Heart right ventricle (tissue), 16 donors: ENCODE measurements at regions of chr22 and their contacts with region 1.

Region 1: DNA sequence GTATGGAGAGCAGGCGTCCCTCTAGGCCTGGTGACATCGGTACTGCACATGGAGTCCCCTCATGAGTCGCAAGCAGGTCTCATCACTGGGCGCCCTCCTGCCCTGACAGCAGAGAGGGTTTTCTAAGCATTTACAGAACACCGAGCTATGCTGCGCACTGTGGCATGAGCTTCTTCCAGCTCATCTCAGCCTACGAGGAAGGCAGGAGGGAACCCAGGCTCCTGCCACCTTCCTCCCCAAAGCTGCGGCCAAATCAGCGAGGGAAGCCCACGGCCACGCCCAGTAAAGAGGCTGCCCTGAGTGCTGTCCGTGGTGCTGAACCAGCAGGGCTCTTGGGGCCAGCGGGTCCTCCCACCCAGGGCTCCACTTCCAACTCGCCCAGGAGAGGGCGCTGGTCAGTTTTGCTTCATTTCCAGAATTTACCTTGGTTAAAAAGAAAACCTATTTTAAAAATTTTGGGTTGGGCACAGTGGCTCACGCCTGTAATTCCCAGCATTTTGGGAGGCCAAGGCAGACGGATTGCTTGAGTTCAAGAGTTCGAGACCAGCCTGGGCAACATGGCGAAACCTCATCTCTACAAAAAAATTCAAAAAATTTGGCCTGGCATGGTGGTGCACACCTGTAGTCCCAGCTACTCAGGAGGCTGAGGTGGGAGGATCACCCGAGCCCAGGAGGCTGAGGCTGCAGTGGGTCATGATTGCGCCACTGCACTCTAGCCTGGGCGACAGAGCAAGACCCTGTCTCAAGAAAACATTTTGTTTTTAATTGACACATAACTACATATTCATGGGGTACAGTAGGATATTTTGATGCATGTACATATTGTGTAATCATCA is 34.2 kb downstream of the PHF21B start:
- DNase-seq: peak; percentile 80 to 82
- ATAC-seq: peak; percentile 76 to 94 (median 90)
- H3K4me3 ChIP-seq: no peak overlapping the region
- H3K27ac ChIP-seq: no peak overlapping the region
- H3K4me1 ChIP-seq: no peaks in the 10 kb centered on the region
- H3K27me3 ChIP-seq: peaks cover 0 to 31% (median 10%) of the 10 kb centered on the region in 7 donors
- CTCF ChIP-seq: peak; percentile 22 to 75 (median 69)

Region 2: DNA sequence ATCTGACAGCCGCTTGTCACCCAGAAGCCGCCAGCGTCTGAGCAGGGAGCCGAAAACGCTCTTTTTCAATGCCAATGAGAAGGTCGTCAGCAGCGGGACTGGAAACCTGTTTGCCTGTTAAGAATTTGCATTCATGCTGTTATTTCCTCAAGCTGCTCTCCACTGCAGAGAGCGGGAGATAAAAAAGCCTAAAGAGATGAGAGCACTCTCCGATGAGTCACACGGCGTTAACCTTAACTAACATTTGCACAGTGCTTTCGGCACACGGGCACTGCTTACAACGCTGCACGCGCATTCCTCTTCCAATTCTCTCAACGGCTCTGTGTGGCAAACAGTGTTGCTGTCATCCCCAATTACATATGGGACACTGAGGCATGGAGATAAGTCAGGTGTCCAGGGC is 437.6 kb before region 1 on chr22:
- intact Hi-C with region 1: no loop called
- DNase-seq: no peak
- ATAC-seq: no peak
- H3K4me3 ChIP-seq: no peak overlapping the region
- H3K27ac ChIP-seq: no peak overlapping the region
- H3K4me1 ChIP-seq: peaks cover 0 to 4% (median 0%) of the 10 kb centered on the region in 9 donors
- H3K27me3 ChIP-seq: peaks cover 0 to 25% (median 17%) of the 10 kb centered on the region in 7 donors
- CTCF ChIP-seq: no peak

Region 3: GRCh38 chr22:45105281-45105702 is 129.6 kb after region 1 on chr22:
- intact Hi-C with region 1: no loop called
- DNase-seq: no peak
- ATAC-seq: no peak
- H3K4me3 ChIP-seq: no peak overlapping the region
- H3K27ac ChIP-seq: no peak overlapping the region
- H3K4me1 ChIP-seq: peaks cover 0 to 3% (median 0%) of the 10 kb centered on the region in 9 donors
- H3K27me3 ChIP-seq: peaks cover 0 to 62% (median 36%) of the 10 kb centered on the region in 7 donors
- CTCF ChIP-seq: no peak

Region 4: DNA sequence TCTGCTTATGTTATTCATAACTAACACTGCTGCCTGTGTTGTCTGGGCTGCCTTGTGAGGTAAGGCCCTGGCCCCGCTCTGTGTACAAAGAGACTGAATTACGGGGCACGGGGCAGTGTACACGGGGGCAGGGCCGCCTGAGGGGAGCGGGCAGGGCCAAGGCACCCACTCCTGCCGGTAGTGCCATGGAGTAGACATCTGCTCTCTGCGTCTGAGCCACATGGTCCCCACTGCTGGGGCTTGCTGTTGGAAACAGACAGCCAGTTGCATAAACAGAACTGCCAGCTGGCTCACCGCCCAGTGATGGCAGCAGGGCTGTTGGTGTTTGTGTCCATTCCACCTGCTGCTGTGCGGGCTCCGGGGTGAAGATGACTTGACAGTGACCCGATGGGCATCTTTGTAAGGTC is 353.9 kb after region 1 on chr22:
- intact Hi-C with region 1: loop called in 1 of 10 experiments (anchors 10 kb)
- DNase-seq: peak; percentile 80 to 82
- ATAC-seq: peak; percentile 64 to 93 (median 84)
- H3K4me3 ChIP-seq: no peak overlapping the region
- H3K27ac ChIP-seq: peak overlapping the region in 9 of 10 donors; percentile 44 to 83 (median 61)
- H3K4me1 ChIP-seq: peaks cover 0 to 36% (median 20%) of the 10 kb centered on the region in 9 donors
- H3K27me3 ChIP-seq: no peaks in the 10 kb centered on the region
- CTCF ChIP-seq: no peak